ENCODE measurements at regions of chr14 and their contacts with region 1.

Region 1: GRCh38 chr14:93206793-93207467 is at the starts of genes GON7 and UBR7:
- DNase-seq: peak; percentile 94 to 97
- ATAC-seq: peak; percentile 98 to 99 (median 98)
- H3K4me3 ChIP-seq: peak within 1 kb of the TSS; percentile 97
- H3K27ac ChIP-seq: peak within 1 kb of the TSS; percentile 87
- H3K4me1 ChIP-seq: peaks cover 18% of the 10 kb centered on the region
- H3K27me3 ChIP-seq: no peaks in the 10 kb centered on the region
- CTCF ChIP-seq: peak; percentile 36
- total RNA-seq, gene GON7: 7.4 to 10.3 (median 7.6) TPM
- total RNA-seq, gene UBR7: 11.5 to 22.0 (median 14.5) TPM

Region 2: GRCh38 chr14:93184388-93185353 is 22.3 kb before region 1 on chr14 and contains the starts of genes LYSET and MOAP1:
- intact Hi-C with region 1: loop called in 1 of 2 experiments (anchors 2 kb)
- DNase-seq: peak; percentile 88 to 94
- ATAC-seq: peak; percentile 95 to 96 (median 95)
- H3K4me3 ChIP-seq: peak within 1 kb of the TSS; percentile 89
- H3K27ac ChIP-seq: peak within 1 kb of the TSS; percentile 92
- H3K4me1 ChIP-seq: peaks cover 19% of the 10 kb centered on the region
- H3K27me3 ChIP-seq: no peaks in the 10 kb centered on the region
- CTCF ChIP-seq: no peak
- total RNA-seq, gene LYSET: 19.7 to 30.1 (median 24.4) TPM
- total RNA-seq, gene MOAP1: 28.4 to 49.2 (median 35.1) TPM

Region 3: GRCh38 chr14:93332853-93333630 is 126.1 kb after region 1 on chr14 and contains the start of gene BTBD7:
- intact Hi-C with region 1: loop called in 1 of 2 experiments (anchors 10 kb)
- DNase-seq: peak; percentile 97 to 98
- ATAC-seq: peak; percentile 98 to 99 (median 99)
- H3K4me3 ChIP-seq: peak within 1 kb of the TSS; percentile 95
- H3K27ac ChIP-seq: peak within 1 kb of the TSS; percentile 97
- H3K4me1 ChIP-seq: peaks cover 27% of the 10 kb centered on the region
- H3K27me3 ChIP-seq: no peaks in the 10 kb centered on the region
- CTCF ChIP-seq: peak; percentile 18
- total RNA-seq, gene BTBD7: 18.9 to 24.9 (median 22.6) TPM

Region 4: DNA sequence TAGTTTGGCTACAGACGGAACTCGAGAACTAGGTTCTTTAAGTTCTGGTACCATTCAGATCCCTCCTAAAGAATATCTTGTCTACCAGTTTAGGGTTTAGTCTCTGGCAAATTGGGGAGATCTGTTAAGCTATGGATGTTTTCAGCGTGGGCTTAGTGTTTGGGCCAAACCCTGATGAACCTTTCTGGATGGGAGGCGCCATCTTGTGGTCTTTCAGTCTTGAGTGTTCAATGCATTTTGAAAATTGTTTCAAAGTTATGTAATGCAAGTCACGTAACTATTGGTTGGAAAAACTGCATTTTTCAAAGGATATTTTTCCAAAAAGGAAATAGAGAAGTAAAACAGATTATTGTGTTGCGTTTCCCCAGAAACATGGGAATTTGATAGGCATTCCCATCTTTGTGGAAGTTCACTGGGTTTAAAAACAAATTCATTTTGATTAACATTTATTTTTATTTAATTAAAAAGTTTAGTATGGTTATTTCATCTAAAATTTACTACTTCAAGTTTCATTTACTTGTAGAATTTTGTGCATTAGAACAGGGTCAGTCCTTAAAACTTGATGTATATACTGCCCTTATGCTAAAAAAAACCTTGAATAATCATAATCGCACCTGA is 412.4 kb after region 1 on chr14:
- intact Hi-C with region 1: loop called in 1 of 2 experiments (anchors 10 kb)
- DNase-seq: no peak
- ATAC-seq: no peak
- H3K4me3 ChIP-seq: no peak overlapping the region
- H3K27ac ChIP-seq: no peak overlapping the region
- H3K4me1 ChIP-seq: no peaks in the 10 kb centered on the region
- H3K27me3 ChIP-seq: no peaks in the 10 kb centered on the region
- CTCF ChIP-seq: peak; percentile 42